ENCODE measurements at regions of chr5 and their contacts with region 1.

Region 1: DNA sequence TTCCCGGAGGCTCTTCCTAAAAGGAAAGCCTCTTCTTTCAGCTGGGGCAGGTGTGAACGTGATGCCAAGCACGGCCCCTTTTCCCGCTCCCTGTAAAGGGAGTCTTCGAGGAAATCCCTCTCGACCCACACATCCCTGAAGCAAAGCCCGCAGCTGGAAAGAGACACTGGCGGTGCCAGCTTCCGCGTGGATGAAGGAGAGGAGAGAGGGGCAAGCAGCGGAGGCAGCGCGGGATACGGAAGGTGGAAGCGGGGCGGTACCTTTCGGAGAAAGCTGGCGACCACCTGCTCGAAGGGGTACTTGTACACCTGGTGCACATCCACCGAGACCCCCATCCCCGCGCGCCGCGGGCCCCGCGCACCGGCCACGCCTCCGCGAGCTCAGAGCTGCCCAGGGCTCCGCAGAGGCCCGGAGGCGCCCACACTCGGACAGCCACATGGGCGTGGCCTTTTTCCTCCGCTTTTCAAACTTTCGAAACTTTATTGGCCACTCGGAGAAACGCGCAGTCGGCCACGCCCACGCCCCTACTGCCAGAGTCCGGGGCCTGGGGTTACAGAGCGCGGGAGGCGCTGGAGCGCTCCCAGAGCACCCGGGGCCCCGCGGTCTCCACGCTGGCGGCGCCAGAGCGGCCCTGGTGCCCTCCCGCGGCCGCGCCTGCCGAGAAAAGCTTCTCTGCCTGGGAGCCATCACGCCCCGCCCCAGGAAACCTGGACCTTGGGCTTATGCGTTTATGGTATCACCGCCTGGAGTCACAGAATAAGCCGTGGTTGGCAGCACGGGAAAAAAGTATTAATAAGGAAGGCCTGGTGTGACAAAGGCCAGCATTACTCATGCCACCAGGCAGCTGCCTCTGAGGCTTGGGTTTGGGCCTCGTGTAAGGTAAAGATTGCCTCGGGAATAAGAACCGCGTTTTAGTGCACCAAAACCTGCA is at the start of gene PRELID2:
- DNase-seq: peak; percentile 56
- H3K4me3 Mint-ChIP-seq: peak within 1 kb of the TSS; percentile 73
- H3K27ac Mint-ChIP-seq: peak within 1 kb of the TSS; percentile 28
- H3K4me1 Mint-ChIP-seq: peaks cover 24% of the 10 kb centered on the region
- H3K27me3 Mint-ChIP-seq: peaks cover 12% of the 10 kb centered on the region
- total RNA-seq, gene PRELID2: 5.6 and 7.1 TPM in 2 replicates

Region 2: GRCh38 chr5:146124580-146124979 is 289.4 kb after region 1 on chr5:
- intact Hi-C with region 1: loop called (anchors 10 kb)
- DNase-seq: no peak
- H3K4me3 Mint-ChIP-seq: no peak overlapping the region
- H3K27ac Mint-ChIP-seq: no peak overlapping the region
- H3K4me1 Mint-ChIP-seq: no peaks in the 10 kb centered on the region
- H3K27me3 Mint-ChIP-seq: no peaks in the 10 kb centered on the region

Measured in activated T-helper 2 cell treated with anti-CD3 and anti-CD28 coated beads, Interferon-gamma antibody, Interleukin-2, Interleukin-4, amounts not matched to agents 10 μg/mL and 5 μg/mL and 100 μg/mL, durations not matched to agents 14 hours and 24 hours and 36 hours (primary cell).